GM10248 (cell line): ENCODE measurements at regions of chr1 and their contacts with region 1.

Region 1: GRCh38 chr1:241600496-241600901 is 39.7 kb downstream of the CHML start:
- DNase-seq: peak; percentile 31
- CTCF ChIP-seq: no peak

Region 2: GRCh38 chr1:241235256-241235897 is 365.1 kb before region 1 on chr1:
- CTCF ChIA-PET with region 1: no interaction called
- POLR2A ChIA-PET with region 1: no interaction called
- DNase-seq: no peak
- CTCF ChIP-seq: no peak

Region 3: GRCh38 chr1:241627453-241628259 is 27.2 kb after region 1 on chr1:
- CTCF ChIA-PET with region 1: interaction called, 11 read pairs
- POLR2A ChIA-PET with region 1: no interaction called
- DNase-seq: peak; percentile 34
- CTCF ChIP-seq: peak; percentile 59

Region 4: GRCh38 chr1:241658081-241658793 is 57.7 kb after region 1 on chr1:
- CTCF ChIA-PET with region 1: no interaction called
- POLR2A ChIA-PET with region 1: no interaction called
- DNase-seq: no peak
- CTCF ChIP-seq: no peak

Region 5: GRCh38 chr1:241738284-241739078 is 138.0 kb after region 1 on chr1:
- CTCF ChIA-PET with region 1: no interaction called
- POLR2A ChIA-PET with region 1: no interaction called
- DNase-seq: no peak
- CTCF ChIP-seq: no peak

Region 6: DNA sequence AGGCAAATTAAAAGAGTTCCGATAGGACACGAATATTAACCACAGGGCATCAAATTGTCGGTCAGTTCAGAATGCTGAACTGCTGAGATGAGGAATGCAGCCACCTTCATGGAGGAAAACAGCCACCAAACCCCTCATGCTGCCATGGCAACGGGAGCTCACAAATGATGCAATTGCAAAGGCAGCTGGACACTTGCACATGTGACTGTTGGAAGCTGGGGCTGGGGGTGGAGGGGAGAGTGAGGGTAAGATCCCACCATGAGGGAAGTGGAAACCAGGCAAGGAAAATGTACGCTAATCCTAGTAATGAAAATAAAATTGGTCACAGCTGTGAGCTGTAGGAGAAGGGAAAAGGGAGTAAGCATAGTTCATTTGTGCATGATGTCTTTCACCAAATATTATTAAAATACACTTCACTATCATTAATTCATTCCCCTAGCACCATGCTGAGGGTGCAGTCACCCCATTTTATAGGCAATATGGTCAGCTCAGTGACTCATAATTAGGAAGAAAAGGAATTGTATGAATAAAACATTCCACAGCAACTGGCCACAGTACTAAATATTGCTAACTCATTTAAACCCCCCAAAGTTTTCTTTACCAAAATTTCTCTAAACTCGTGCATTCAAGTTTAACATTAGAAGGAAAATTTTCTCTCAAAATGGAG is 372.3 kb after region 1 on chr1:
- CTCF ChIA-PET with region 1: no interaction called
- POLR2A ChIA-PET with region 1: no interaction called
- DNase-seq: no peak
- CTCF ChIP-seq: no peak